GM13977 (cell line): ENCODE measurements at regions of chr4 and their contacts with region 1.

Region 1: GRCh38 chr4:143921181-143921580 is 15.8 kb upstream of the GYPE start:
- DNase-seq: no peak
- CTCF ChIP-seq: no peak

Region 2: DNA sequence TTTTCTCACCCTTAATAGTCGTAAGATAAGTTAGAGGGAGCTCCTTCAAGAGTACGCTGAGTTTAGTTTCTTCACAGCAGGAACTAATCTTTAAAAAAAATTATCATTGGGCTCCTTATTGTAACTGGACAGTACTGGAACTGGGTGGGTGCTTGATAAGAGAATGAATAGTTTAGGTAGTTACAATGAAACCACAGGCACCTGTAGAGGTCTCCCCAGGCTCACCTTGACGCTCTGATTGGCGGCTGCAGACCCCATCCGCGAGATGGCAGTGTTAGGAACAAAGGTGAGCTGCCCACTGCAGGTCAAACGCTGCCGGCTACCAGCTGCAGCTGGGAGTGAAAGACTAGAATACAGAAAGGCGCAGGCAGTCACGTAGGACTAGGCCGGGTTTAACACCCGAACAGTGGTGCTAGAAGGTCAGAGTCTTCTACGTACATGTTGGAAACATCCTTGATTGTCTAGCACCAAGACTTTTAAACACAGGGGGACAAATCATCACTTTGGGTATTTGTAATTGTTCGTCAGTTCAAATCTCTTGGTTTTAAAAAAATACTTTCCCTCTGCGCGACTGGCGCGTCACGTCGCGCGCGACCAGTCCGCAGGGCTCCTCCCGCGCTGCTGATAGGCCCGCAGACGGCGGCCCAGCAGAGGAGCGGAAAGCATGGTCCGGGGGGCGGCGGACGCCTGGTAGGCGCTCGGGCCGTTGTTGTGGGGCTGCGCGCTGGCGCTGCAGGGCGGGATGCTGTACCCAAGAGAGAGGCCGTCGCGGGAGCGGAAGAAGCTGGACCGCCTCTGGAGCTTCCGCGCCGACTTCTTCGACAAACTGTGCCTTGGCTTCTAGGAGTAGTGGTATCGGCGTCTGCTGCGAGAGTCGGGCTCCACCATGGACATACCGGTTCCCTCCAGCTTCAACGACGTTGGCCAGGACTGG is 362.1 kb before region 1 on chr4:
- in situ Hi-C with region 1: loop called (anchors 25 kb)
- DNase-seq: peak; percentile 69
- CTCF ChIP-seq: peak; percentile 83

Region 3: GRCh38 chr4:144411700-144412099 is 490.5 kb after region 1 on chr4:
- in situ Hi-C with region 1: no loop called
- DNase-seq: no peak
- CTCF ChIP-seq: no peak